ENCODE measurements at regions of chr11 and their contacts with region 1.

Region 1: GRCh38 chr11:48034926-48035871 is 54.8 kb downstream of the PTPRJ start:
- DNase-seq: no peak
- H3K4me3 ChIP-seq: no peak overlapping the region
- H3K4me3 Mint-ChIP-seq: peak overlapping the region in 6 of 8 donors; percentile 11 to 64 (median 42)
- H3K27ac ChIP-seq: no peak overlapping the region
- H3K27ac Mint-ChIP-seq: peak overlapping the region in 4 of 7 donors; percentile 11 to 55 (median 42)
- H3K4me1 ChIP-seq: peaks cover 53% of the 10 kb centered on the region
- H3K4me1 Mint-ChIP-seq: peaks cover 42 to 75% (median 61%) of the 10 kb centered on the region in 4 donors
- H3K27me3 ChIP-seq: no peaks in the 10 kb centered on the region
- H3K27me3 Mint-ChIP-seq: no peaks in the 10 kb centered on the region

Region 2: DNA sequence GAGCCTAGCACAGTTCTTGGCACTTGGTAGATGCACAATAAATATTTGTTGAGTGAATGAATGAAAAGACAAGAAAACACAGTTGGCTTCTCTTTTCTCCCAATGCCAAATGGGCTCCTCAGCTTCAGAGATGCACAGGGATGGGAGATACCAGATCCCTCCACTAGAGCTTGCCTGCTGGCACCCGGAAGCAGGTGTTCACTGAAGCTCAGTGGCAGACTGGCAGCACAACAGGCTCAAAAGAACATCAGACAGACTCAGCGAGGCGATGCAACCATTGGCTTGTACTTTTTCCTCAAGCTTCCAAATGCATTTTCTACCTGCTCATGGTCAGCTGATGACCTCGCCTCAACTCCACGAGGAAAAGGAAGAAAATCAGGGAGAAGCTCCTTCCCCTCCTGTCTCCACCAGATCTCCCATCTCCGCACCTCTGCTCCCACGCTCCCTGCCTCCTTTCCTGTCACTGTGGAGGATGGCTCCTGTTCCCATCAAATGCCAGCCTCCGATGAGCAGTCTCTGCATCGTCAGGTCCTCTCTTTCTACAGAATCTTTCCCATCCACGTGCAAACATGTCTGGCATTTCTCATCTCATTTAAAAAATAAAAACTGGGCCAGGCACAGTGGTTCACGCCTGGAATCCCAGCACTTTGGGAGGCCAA is 592.0 kb before region 1 on chr11:
- CTCF ChIA-PET with region 1: no interaction called
- POLR2A ChIA-PET with region 1: no interaction called
- intact Hi-C with region 1: no loop called
- DNase-seq: no peak
- H3K4me3 ChIP-seq: no peak overlapping the region
- H3K4me3 Mint-ChIP-seq: no peak overlapping the region
- H3K27ac ChIP-seq: no peak overlapping the region
- H3K27ac Mint-ChIP-seq: no peak overlapping the region
- H3K4me1 ChIP-seq: no peaks in the 10 kb centered on the region
- H3K4me1 Mint-ChIP-seq: no peaks in the 10 kb centered on the region
- H3K27me3 ChIP-seq: no peaks in the 10 kb centered on the region
- H3K27me3 Mint-ChIP-seq: no peaks in the 10 kb centered on the region

Region 3: GRCh38 chr11:48020092-48020755 is 15.0 kb before region 1 on chr11:
- CTCF ChIA-PET with region 1: interaction called, 5 read pairs
- POLR2A ChIA-PET with region 1: interaction called, 7 read pairs
- intact Hi-C with region 1: loop called (anchors 1 kb)
- DNase-seq: peak; percentile 58 to 74 (median 59)
- H3K4me3 ChIP-seq: peak overlapping the region in 1 of 2 donors; percentile 17
- H3K4me3 Mint-ChIP-seq: peak overlapping the region; percentile 21 to 85 (median 70)
- H3K27ac ChIP-seq: peak overlapping the region; percentile 59
- H3K27ac Mint-ChIP-seq: peak overlapping the region; percentile 75 to 93 (median 84)
- H3K4me1 ChIP-seq: peaks cover 62% of the 10 kb centered on the region
- H3K4me1 Mint-ChIP-seq: peaks cover 54 to 77% (median 65%) of the 10 kb centered on the region in 4 donors
- H3K27me3 ChIP-seq: no peaks in the 10 kb centered on the region
- H3K27me3 Mint-ChIP-seq: no peaks in the 10 kb centered on the region